HepG2 (cell line): ENCODE measurements at regions of chr4 and their contacts with region 1.

Region 1: DNA sequence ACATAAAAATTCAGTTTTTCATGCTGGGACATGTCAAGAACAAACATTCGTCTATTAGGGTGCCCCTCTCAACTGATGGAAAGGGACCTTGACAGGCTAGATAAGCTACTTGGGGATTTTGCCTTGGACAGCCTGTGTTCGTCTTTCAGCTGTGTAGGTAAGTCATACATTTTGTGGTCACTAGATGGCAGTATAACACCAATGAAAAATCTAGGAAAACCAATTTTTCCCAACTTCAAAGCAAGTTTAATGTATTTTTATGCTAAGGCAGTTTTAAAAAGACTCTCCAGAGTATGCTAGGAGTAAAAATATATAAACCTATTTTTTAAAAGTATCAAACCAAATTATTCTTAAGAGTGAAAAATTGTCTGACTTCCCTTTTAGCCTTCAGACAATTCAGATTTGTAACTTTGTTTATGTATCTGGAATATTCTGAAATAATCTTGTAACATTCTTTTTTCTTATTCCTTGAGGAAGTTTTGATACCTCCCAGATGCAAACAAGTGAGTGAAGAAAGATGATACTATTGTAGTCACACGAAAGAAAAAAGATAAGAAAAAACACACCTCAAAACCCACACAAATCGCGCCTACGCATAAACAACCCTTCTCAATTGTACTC is 158.3 kb downstream of the CPE start:
- DNase-seq: peak; percentile 40
- ATAC-seq: peak; percentile 72
- H3K4me3 ChIP-seq: no peak overlapping the region
- H3K27ac ChIP-seq: no peak overlapping the region
- H3K4me1 ChIP-seq: no peaks in the 10 kb centered on the region
- H3K27me3 ChIP-seq: no peaks in the 10 kb centered on the region
- CTCF ChIP-seq: peak; percentile 74
- EP300 ChIP-seq: no peak
- POLR2A ChIP-seq: no peak
- RAD21 ChIP-seq: peak; percentile 46

Region 2: GRCh38 chr4:165425629-165426028 is 111.5 kb before region 1 on chr4:
- CTCF ChIA-PET with region 1: no interaction called
- POLR2A ChIA-PET with region 1: no interaction called
- in situ Hi-C with region 1: no loop called
- intact Hi-C with region 1: no loop called
- DNase-seq: no peak
- ATAC-seq: peak; percentile 40; the same call in 2 of the 3 replicates
- H3K4me3 ChIP-seq: no peak overlapping the region
- H3K27ac ChIP-seq: no peak overlapping the region
- H3K4me1 ChIP-seq: peaks cover 8% of the 10 kb centered on the region
- H3K27me3 ChIP-seq: no peaks in the 10 kb centered on the region
- CTCF ChIP-seq: peak; percentile 27
- EP300 ChIP-seq: no peak
- POLR2A ChIP-seq: no peak
- RAD21 ChIP-seq: no peak

Region 3: DNA sequence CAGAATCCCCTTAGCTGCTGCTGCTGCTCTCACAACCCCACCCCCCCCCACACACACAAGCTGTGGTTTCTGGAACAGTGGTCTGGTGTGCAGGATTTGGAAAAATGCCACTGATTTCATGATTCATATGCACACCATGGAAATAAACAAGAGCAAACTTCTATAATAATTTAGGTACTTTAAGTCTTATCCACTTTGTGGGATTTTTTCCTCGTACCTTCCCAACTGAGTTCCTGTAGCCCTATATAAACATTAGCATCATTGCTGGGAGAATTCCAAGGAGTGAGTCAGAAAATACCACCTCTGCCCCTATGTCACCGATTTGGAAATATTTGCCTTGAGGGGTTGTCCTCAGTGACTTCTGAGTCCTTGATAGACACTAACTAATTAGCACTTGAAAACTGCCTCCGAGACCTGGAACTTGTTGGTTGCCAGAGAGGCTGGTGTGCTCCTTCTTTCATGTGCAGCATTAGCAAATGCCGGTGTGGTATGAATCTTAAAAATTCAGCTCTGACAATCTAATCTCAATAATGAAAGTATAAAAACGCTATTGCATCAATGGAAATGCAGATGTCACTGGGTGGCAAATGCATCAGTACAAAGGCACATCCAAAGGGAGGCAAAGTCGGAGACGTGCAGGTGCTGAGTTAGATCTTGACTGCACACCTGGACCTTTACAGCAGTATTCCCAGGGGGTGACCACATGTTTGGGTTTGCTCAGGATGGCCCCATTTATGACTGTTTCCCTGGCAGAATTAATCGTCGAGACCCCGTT is 96.5 kb before region 1 on chr4:
- CTCF ChIA-PET with region 1: no interaction called
- POLR2A ChIA-PET with region 1: no interaction called
- in situ Hi-C with region 1: no loop called
- intact Hi-C with region 1: no loop called
- DNase-seq: peak; percentile 23
- ATAC-seq: no peak
- H3K4me3 ChIP-seq: no peak overlapping the region
- H3K27ac ChIP-seq: no peak overlapping the region
- H3K4me1 ChIP-seq: peaks cover 6% of the 10 kb centered on the region; the same call in 1 of the 2 replicates
- H3K27me3 ChIP-seq: no peaks in the 10 kb centered on the region
- CTCF ChIP-seq: no peak
- EP300 ChIP-seq: no peak
- POLR2A ChIP-seq: no peak
- RAD21 ChIP-seq: no peak

Region 4: GRCh38 chr4:165493359-165493758 is 43.8 kb before region 1 on chr4:
- CTCF ChIA-PET with region 1: no interaction called
- POLR2A ChIA-PET with region 1: no interaction called
- in situ Hi-C with region 1: no loop called
- intact Hi-C with region 1: loop called (anchors 2 kb)
- DNase-seq: peak; percentile 27
- ATAC-seq: peak; percentile 87
- H3K4me3 ChIP-seq: no peak overlapping the region
- H3K27ac ChIP-seq: no peak overlapping the region
- H3K4me1 ChIP-seq: no peaks in the 10 kb centered on the region
- H3K27me3 ChIP-seq: no peaks in the 10 kb centered on the region
- CTCF ChIP-seq: peak; percentile 71
- EP300 ChIP-seq: no peak
- POLR2A ChIP-seq: no peak
- RAD21 ChIP-seq: peak; percentile 43; the same call in 1 of the 2 replicates

Region 5: DNA sequence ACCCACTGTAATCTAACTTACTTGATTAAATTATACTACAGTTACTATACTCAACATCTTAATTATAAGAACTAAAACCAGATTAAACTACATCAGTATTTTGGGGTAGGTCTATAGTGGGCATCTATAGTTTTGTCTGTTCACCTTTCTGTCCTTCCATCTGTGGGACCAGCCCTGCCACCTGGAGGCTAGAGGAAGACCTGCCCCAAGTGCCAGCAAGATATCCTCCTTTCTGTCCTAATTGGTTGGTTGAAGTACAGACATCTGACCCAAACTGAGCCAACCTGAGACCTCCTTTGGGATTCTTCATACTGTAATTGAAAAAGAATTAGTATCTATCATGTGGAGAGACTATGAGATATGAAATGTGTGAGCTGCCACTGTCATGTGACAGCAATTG is 163.7 kb after region 1 on chr4:
- CTCF ChIA-PET with region 1: interaction called, 4 read pairs
- POLR2A ChIA-PET with region 1: no interaction called
- in situ Hi-C with region 1: loop called (anchors 5 kb)
- intact Hi-C with region 1: loop called (anchors 1 kb)
- DNase-seq: peak; percentile 12
- ATAC-seq: peak; percentile 87
- H3K4me3 ChIP-seq: no peak overlapping the region
- H3K27ac ChIP-seq: no peak overlapping the region
- H3K4me1 ChIP-seq: no peaks in the 10 kb centered on the region
- H3K27me3 ChIP-seq: no peaks in the 10 kb centered on the region
- CTCF ChIP-seq: peak; percentile 62
- EP300 ChIP-seq: no peak
- POLR2A ChIP-seq: no peak
- RAD21 ChIP-seq: peak; percentile 24; the same call in 1 of the 2 replicates

Region 6: DNA sequence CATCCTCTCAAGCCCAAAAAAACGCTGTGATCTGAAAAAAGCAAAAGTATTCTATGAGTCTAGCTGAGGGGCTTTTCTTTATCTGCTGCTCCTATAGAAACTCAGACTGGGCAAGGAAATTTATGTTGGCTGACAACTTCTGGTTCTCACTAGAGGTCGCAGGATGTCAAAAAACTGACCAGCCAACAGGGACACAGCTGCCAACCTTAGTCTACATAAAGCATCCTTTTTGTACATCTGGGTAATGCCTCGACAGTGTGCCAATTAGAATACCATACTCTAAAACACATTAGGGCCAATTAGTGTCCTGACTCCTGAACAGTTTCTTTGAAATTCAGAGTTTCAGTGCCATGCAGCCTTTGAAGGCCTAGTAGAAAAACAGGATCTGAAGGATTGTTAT is 327.1 kb after region 1 on chr4:
- CTCF ChIA-PET with region 1: no interaction called
- POLR2A ChIA-PET with region 1: no interaction called
- in situ Hi-C with region 1: no loop called
- intact Hi-C with region 1: no loop called
- DNase-seq: peak; percentile 20
- ATAC-seq: peak; percentile 57
- H3K4me3 ChIP-seq: no peak overlapping the region
- H3K27ac ChIP-seq: no peak overlapping the region
- H3K4me1 ChIP-seq: no peaks in the 10 kb centered on the region
- H3K27me3 ChIP-seq: no peaks in the 10 kb centered on the region
- CTCF ChIP-seq: peak; percentile 46
- EP300 ChIP-seq: no peak
- POLR2A ChIP-seq: no peak
- RAD21 ChIP-seq: no peak

Region 7: GRCh38 chr4:166091912-166092510 is 554.9 kb after region 1 on chr4:
- CTCF ChIA-PET with region 1: interaction called, 30 read pairs
- POLR2A ChIA-PET with region 1: no interaction called
- in situ Hi-C with region 1: loop called (anchors 5 kb)
- intact Hi-C with region 1: loop called (anchors 1 kb)
- DNase-seq: peak; percentile 28
- ATAC-seq: peak; percentile 49; the same call in 1 of the 3 replicates
- H3K4me3 ChIP-seq: no peak overlapping the region
- H3K27ac ChIP-seq: no peak overlapping the region
- H3K4me1 ChIP-seq: no peaks in the 10 kb centered on the region
- H3K27me3 ChIP-seq: peaks cover 0 to 2% of the 10 kb centered on the region in 2 experiments; a peak in 1 of 5 replicates
- CTCF ChIP-seq: peak; percentile 67
- EP300 ChIP-seq: no peak
- POLR2A ChIP-seq: no peak
- RAD21 ChIP-seq: 0 out of 2 replicates have a peak, but pooled peaks have one; percentile 22

Region 8: GRCh38 chr4:166165829-166166420 is 628.8 kb after region 1 on chr4:
- CTCF ChIA-PET with region 1: no interaction called
- POLR2A ChIA-PET with region 1: no interaction called
- in situ Hi-C with region 1: no loop called
- intact Hi-C with region 1: loop called (anchors 5 kb)
- DNase-seq: peak; percentile 73
- ATAC-seq: peak; percentile 96
- H3K4me3 ChIP-seq: no peak overlapping the region
- H3K27ac ChIP-seq: no peak overlapping the region
- H3K4me1 ChIP-seq: no peaks in the 10 kb centered on the region
- H3K27me3 ChIP-seq: no peaks in the 10 kb centered on the region
- CTCF ChIP-seq: peak; percentile 85
- EP300 ChIP-seq: no peak
- POLR2A ChIP-seq: no peak
- RAD21 ChIP-seq: peak; percentile 62

Region 9: GRCh38 chr4:166252487-166253402 is 715.6 kb after region 1 on chr4:
- CTCF ChIA-PET with region 1: no interaction called
- POLR2A ChIA-PET with region 1: no interaction called
- in situ Hi-C with region 1: no loop called
- intact Hi-C with region 1: loop called (anchors 2 kb)
- DNase-seq: peak; percentile 10
- ATAC-seq: peak; percentile 47; the same call in 1 of the 3 replicates
- H3K4me3 ChIP-seq: no peak overlapping the region
- H3K27ac ChIP-seq: no peak overlapping the region
- H3K4me1 ChIP-seq: no peaks in the 10 kb centered on the region
- H3K27me3 ChIP-seq: no peaks in the 10 kb centered on the region
- CTCF ChIP-seq: peak; percentile 46
- EP300 ChIP-seq: no peak
- POLR2A ChIP-seq: no peak
- RAD21 ChIP-seq: no peak

Region 10: GRCh38 chr4:166277401-166277800 is 740.3 kb after region 1 on chr4:
- CTCF ChIA-PET with region 1: no interaction called
- POLR2A ChIA-PET with region 1: no interaction called
- in situ Hi-C with region 1: no loop called
- intact Hi-C with region 1: no loop called
- DNase-seq: no peak
- ATAC-seq: no peak
- H3K4me3 ChIP-seq: no peak overlapping the region
- H3K27ac ChIP-seq: no peak overlapping the region
- H3K4me1 ChIP-seq: no peaks in the 10 kb centered on the region
- H3K27me3 ChIP-seq: no peaks in the 10 kb centered on the region; a peak in 1 of 5 replicates
- CTCF ChIP-seq: no peak
- EP300 ChIP-seq: no peak
- POLR2A ChIP-seq: no peak
- RAD21 ChIP-seq: no peak